Mammary epithelial cell (primary cell): ENCODE measurements at regions of chr12 and their contacts with region 1.

Region 1: DNA sequence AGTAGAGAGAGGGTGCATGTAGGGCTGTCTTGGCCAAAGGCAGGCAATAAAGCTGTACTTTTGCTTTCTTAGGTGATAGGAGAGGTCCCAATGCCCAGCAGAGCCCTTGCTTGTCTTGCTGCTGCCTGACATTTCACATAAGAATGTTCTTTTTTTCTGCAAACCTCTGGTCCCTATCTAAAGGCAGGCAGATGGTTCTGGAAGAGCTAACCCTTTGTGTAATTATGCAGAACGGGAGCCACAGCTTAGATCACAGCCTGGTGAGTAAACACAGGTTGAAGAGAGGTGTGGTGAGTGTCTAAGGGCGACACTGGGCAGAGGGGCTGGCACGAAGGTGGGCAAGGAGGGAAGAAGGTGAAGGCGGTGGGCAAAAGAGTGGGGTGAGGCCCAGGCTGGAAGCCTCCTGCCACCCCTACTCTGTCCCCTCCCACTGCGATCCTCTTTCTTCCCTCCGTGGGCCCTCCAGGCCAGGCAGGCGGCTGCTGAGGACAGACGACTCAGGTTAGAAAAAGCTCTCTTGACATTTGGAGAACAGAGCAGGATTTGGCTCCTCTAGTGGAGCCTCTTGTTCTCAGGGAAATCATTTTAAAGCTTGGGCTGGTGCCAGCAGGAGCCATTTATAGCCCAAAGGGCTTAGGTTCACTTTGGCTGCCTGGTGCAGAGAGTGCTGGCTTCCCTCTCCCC is 42.8 kb downstream of the PRMT8 start:
- DNase-seq: no peak
- H3K4me3 ChIP-seq: no peak overlapping the region
- H3K27ac ChIP-seq: no peak overlapping the region
- H3K4me1 ChIP-seq: no peaks in the 10 kb centered on the region
- H3K27me3 ChIP-seq: no peaks in the 10 kb centered on the region
- CTCF ChIP-seq: no peak

Region 2: GRCh38 chr12:2902272-2902880 is 631.5 kb before region 1 on chr12:
- CTCF ChIA-PET with region 1: no interaction called
- dilution Hi-C with region 1: no loop called
- in situ Hi-C with region 1: no loop called
- intact Hi-C with region 1: no loop called
- DNase-seq: no peak
- H3K4me3 ChIP-seq: no peak overlapping the region
- H3K27ac ChIP-seq: no peak overlapping the region
- H3K4me1 ChIP-seq: no peaks in the 10 kb centered on the region
- H3K27me3 ChIP-seq: no peaks in the 10 kb centered on the region
- CTCF ChIP-seq: no peak

Region 3: GRCh38 chr12:3453990-3454675 is 79.7 kb before region 1 on chr12:
- CTCF ChIA-PET with region 1: no interaction called
- dilution Hi-C with region 1: no loop called
- in situ Hi-C with region 1: no loop called
- intact Hi-C with region 1: no loop called
- DNase-seq: peak; percentile 99
- H3K4me3 ChIP-seq: no peak overlapping the region
- H3K27ac ChIP-seq: peak overlapping the region; percentile 94
- H3K4me1 ChIP-seq: peaks cover 51% of the 10 kb centered on the region
- H3K27me3 ChIP-seq: no peaks in the 10 kb centered on the region
- CTCF ChIP-seq: no peak

Region 4: DNA sequence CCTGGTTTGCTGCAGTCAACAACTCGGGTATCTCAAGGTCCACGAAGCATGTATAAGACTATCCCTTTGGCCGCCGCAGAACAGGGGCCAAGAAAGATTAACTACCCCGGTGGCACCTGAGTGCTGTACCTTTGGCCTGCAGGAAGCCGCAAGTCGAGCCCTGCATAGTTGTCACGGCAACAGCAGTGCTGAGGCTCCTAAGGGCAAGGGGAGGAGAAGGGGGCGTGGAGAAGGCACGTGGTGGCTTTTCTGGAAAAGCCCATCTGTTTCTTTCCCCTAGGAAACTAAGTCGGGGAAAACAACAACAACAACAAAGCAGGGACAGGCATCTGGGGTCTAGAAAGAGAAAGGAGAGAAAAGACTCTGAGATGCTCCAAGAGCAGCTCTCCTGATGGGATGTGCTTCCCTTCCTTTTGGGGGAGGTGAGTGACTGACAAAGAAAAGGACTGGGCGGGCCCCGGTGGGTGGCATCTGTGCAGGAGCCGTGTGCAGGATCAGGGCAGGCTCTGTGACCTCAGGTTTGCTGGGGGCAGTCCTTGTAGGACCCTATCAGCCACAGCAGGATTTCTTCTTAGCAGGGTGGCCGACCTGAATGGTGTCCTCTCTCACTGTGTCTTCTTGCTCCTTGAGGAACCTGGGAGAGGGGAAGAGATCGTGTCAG is 81.1 kb after region 1 on chr12:
- CTCF ChIA-PET with region 1: no interaction called
- dilution Hi-C with region 1: loop called (anchors 5 kb)
- in situ Hi-C with region 1: no loop called
- intact Hi-C with region 1: no loop called
- DNase-seq: no peak
- H3K4me3 ChIP-seq: no peak overlapping the region
- H3K27ac ChIP-seq: no peak overlapping the region
- H3K4me1 ChIP-seq: no peaks in the 10 kb centered on the region
- H3K27me3 ChIP-seq: no peaks in the 10 kb centered on the region
- CTCF ChIP-seq: no peak